CD14-positive monocyte (primary cell): ENCODE measurements at regions of chr6 and their contacts with region 1.

Region 1: DNA sequence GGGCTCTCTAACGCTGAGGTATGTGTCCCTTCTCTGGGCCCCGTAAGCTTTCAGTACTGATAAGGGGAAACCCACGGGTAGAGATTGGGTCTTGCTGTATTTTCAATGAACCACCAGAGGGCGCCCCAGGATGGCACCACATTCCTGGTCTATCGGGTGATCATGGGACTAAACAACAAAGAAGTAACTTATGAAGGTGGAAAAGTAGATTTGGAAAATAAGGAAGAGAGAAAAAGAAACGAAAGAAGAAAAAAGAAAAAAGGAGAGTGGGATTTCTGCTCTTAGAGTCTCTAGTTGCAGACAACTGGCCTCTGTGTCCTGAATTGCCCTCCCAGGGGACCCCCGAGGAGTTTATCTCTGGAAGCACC is 93.8 kb downstream of the GMPR start:
- DNase-seq: peak; percentile 57 to 76 (median 71)
- H3K4me3 ChIP-seq: no peak overlapping the region
- H3K4me3 Mint-ChIP-seq: no peak overlapping the region
- H3K27ac ChIP-seq: no peak overlapping the region
- H3K27ac Mint-ChIP-seq: no peak overlapping the region
- H3K4me1 ChIP-seq: peaks cover 21 to 23% of the 10 kb centered on the region in 2 donors
- H3K4me1 Mint-ChIP-seq: peaks cover 12% of the 10 kb centered on the region
- H3K27me3 ChIP-seq: no peaks in the 10 kb centered on the region
- H3K27me3 Mint-ChIP-seq: no peaks in the 10 kb centered on the region
- CTCF ChIP-seq: peak; percentile 72

Region 2: DNA sequence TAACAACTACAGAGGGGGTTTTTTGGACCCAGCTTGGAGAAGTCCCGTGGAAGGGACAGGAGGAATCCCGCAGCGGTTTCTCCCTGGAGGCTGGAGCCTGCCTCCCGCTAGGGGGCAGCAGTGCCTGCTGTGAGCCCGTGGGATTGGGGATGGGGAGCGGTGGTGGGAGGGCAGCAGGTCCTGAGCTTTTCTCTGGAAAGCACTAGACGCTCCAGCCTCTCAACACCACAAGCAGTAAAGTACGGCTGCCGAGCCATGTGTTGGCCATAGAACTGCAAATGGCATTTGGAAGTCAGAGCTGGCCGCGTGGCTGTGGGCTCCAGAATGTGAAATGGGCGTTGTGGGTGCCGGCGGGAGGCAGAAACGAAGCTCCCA is 46.0 kb before region 1 on chr6:
- intact Hi-C with region 1: no loop called
- DNase-seq: no peak
- H3K4me3 ChIP-seq: no peak overlapping the region
- H3K4me3 Mint-ChIP-seq: no peak overlapping the region
- H3K27ac ChIP-seq: no peak overlapping the region
- H3K27ac Mint-ChIP-seq: no peak overlapping the region
- H3K4me1 ChIP-seq: no peaks in the 10 kb centered on the region
- H3K4me1 Mint-ChIP-seq: no peaks in the 10 kb centered on the region
- H3K27me3 ChIP-seq: no peaks in the 10 kb centered on the region
- H3K27me3 Mint-ChIP-seq: peaks cover 2 to 3% (median 2%) of the 10 kb centered on the region in 3 donors
- CTCF ChIP-seq: no peak

Region 3: DNA sequence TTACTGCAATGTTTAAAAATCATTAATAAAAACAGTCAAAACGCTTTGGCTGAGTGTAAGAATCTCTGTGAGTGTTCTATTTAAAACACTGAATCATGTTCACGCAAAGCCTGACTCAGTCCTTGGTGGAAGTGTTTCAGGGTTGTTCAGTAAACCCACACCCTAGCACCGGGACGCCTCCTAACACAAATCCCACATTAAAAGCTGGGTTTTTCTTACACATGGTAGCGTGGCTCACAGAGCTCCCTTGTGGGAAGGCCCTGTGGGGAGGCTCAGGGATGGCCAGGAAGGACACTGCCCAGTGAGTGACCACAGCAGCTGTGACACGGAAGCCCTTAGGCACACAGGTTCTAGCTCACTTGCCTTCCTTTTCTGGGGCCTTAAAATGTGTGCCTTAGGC is 13.6 kb before region 1 on chr6:
- intact Hi-C with region 1: loop called in 1 of 2 experiments (anchors 1 kb)
- DNase-seq: no peak
- H3K4me3 ChIP-seq: no peak overlapping the region
- H3K4me3 Mint-ChIP-seq: no peak overlapping the region
- H3K27ac ChIP-seq: no peak overlapping the region
- H3K27ac Mint-ChIP-seq: no peak overlapping the region
- H3K4me1 ChIP-seq: peaks cover 27 to 32% of the 10 kb centered on the region in 2 donors
- H3K4me1 Mint-ChIP-seq: peaks cover 40% of the 10 kb centered on the region
- H3K27me3 ChIP-seq: no peaks in the 10 kb centered on the region
- H3K27me3 Mint-ChIP-seq: peaks cover 0 to 3% (median 3%) of the 10 kb centered on the region in 3 donors
- CTCF ChIP-seq: no peak

Region 4: DNA sequence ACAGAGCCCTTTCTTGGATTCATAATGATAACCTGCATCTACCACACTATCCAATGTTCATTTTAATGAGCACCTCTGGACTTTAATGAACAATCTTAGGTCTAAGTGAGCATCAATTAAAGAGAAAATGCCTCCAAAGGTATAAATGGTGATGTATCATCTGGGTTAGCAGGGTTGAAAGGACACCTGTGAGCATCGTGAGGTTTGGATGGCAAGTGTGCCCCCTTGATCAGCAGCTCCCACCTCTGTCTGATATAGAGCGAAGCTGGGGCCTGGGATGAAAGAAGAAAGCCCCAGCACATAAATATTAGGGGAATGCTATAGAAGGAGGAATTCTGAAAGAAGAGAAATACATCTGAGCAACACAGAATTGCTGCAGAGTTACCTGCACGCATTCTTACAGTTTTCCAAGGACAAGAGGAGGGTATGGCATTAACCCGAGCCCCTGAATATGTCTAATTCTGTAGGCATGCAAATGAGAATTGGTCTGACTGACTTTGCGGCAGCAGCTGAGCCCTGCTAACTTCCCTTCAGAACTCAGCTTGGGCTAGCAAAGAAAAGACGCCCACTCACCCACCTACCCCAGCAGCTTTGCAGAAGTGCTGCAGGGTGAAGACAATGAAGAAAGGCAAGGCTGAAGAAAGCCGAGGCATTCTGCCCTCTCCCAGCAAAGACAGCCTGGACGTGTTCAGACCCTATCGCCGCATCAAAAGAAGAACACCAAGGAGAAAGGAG is 42.5 kb after region 1 on chr6:
- intact Hi-C with region 1: no loop called
- DNase-seq: peak in 1 of 3 donors; percentile 3
- H3K4me3 ChIP-seq: no peak overlapping the region
- H3K4me3 Mint-ChIP-seq: no peak overlapping the region
- H3K27ac ChIP-seq: no peak overlapping the region
- H3K27ac Mint-ChIP-seq: no peak overlapping the region
- H3K4me1 ChIP-seq: no peaks in the 10 kb centered on the region
- H3K4me1 Mint-ChIP-seq: no peaks in the 10 kb centered on the region
- H3K27me3 ChIP-seq: no peaks in the 10 kb centered on the region
- H3K27me3 Mint-ChIP-seq: no peaks in the 10 kb centered on the region
- CTCF ChIP-seq: no peak

Region 5: GRCh38 chr6:16388488-16388887 is 56.3 kb after region 1 on chr6:
- intact Hi-C with region 1: no loop called
- DNase-seq: no peak
- H3K4me3 ChIP-seq: no peak overlapping the region
- H3K4me3 Mint-ChIP-seq: no peak overlapping the region
- H3K27ac ChIP-seq: no peak overlapping the region
- H3K27ac Mint-ChIP-seq: no peak overlapping the region
- H3K4me1 ChIP-seq: no peaks in the 10 kb centered on the region
- H3K4me1 Mint-ChIP-seq: peaks cover 2% of the 10 kb centered on the region
- H3K27me3 ChIP-seq: no peaks in the 10 kb centered on the region
- H3K27me3 Mint-ChIP-seq: peaks cover 0 to 7% (median 1%) of the 10 kb centered on the region in 3 donors
- CTCF ChIP-seq: no peak

Region 6: GRCh38 chr6:16409531-16410441 is 77.6 kb after region 1 on chr6:
- intact Hi-C with region 1: loop called (anchors 5 kb)
- DNase-seq: peak; percentile 47 to 59 (median 56)
- H3K4me3 ChIP-seq: no peak overlapping the region
- H3K4me3 Mint-ChIP-seq: no peak overlapping the region
- H3K27ac ChIP-seq: no peak overlapping the region
- H3K27ac Mint-ChIP-seq: peak overlapping the region in 1 of 7 donors; percentile 7
- H3K4me1 ChIP-seq: peaks cover 20 to 22% of the 10 kb centered on the region in 2 donors
- H3K4me1 Mint-ChIP-seq: peaks cover 36% of the 10 kb centered on the region
- H3K27me3 ChIP-seq: no peaks in the 10 kb centered on the region
- H3K27me3 Mint-ChIP-seq: peaks cover 1 to 2% (median 2%) of the 10 kb centered on the region in 3 donors
- CTCF ChIP-seq: peak; percentile 74

Region 7: DNA sequence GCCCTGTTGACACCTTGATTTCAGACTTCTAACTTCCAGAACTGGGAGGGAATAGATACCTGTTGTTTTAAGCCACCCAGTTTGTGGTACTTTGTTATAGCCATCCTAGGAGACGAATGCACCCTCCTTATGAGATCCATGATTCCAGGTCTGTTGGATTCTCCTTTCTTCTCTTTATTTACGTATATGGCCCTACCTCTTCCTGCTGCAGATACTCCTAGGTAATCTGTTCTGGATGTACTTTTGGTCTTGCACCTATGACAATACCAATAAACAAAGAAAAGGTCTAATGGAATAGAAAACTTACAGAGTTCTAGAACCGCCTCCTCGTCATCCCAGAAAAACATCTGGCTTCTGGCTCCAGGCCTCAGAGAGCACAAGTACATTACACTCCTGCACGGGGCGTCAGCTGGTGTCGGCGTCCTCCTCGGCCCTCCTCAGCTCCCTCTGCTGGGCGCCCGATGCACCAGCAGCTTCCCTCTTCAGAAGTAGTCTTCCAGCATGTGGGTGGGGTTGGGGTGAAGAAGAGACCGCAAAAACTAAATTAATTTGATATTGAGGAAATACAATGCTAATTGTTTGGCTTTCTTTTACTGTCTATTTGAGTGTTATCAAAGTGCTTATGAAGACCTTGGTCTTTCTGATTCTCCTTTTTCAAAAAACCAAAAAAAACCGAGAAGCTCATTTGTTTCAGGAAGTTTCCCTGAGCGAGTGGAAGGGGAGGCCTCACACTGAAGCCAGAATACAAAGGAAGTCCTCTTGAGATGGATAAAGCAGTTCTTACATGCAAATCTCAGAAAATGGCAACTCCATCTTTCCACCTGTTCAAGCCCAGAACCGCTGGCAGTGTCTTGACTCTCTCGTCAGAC is 438.8 kb after region 1 on chr6:
- intact Hi-C with region 1: loop called (anchors 5 to 10 kb)
- DNase-seq: peak; percentile 69 to 83 (median 75)
- H3K4me3 ChIP-seq: peak overlapping the region in 1 of 3 experiments; percentile 37
- H3K4me3 Mint-ChIP-seq: peak overlapping the region; percentile 66 to 86
- H3K27ac ChIP-seq: no peak overlapping the region
- H3K27ac Mint-ChIP-seq: peak overlapping the region; percentile 24 to 88 (median 62)
- H3K4me1 ChIP-seq: peaks cover 29 to 31% of the 10 kb centered on the region in 2 donors
- H3K4me1 Mint-ChIP-seq: peaks cover 44% of the 10 kb centered on the region
- H3K27me3 ChIP-seq: no peaks in the 10 kb centered on the region
- H3K27me3 Mint-ChIP-seq: peaks cover 0 to 2% (median 0%) of the 10 kb centered on the region in 3 donors
- CTCF ChIP-seq: peak; percentile 97

Region 8: DNA sequence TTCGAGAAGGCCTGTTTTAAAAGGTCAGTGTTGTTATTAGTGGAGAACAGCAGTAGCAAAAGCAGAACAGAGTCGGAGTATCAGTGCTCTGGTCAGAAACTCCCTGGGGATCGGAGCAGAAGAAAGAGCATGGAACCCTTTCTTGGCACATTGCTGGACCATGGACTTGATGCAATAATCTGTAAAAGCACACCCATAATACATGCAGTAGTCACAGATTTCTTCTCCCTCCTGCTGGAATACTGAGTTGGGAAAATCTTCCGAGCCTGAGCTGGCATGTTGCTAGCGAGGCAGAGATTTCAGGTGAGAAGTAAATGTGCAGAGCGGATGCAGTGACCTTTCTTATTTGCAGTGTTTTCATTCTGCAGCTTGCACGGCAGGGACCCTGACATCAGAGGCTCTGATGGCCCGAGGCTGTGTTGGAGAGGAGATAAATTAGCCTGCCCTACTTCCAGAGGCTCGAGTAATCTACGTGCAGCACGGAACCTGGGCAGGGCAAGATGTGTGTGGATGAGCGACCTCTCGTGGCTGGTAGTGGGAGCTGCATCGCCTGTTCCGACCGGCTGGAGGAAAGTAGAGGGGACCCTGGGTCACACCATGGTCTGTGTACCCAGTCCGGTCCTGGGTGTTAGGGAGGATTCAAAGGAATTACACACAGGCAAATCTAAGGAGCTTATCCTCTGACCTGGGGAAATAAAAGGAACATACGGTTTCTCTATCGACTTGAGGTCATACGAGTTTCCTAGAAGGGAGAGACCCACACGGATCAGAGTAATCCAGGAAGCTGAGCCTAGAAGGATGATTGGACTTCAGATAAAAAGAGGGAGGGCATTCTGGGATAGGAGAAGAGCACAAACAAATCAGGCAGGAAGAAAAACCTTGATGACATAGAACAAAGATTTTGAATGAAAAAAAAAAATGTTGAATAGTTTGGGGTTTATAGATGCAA is 632.7 kb after region 1 on chr6:
- intact Hi-C with region 1: loop called (anchors 2 to 10 kb)
- DNase-seq: peak; percentile 44 to 64 (median 56)
- H3K4me3 ChIP-seq: peak overlapping the region in 1 of 3 experiments; percentile 5
- H3K4me3 Mint-ChIP-seq: peak overlapping the region in 1 of 2 donors; percentile 68
- H3K27ac ChIP-seq: no peak overlapping the region
- H3K27ac Mint-ChIP-seq: peak overlapping the region in 1 of 7 donors; percentile 50
- H3K4me1 ChIP-seq: peaks cover 3 to 4% of the 10 kb centered on the region in 2 donors
- H3K4me1 Mint-ChIP-seq: peaks cover 8% of the 10 kb centered on the region
- H3K27me3 ChIP-seq: no peaks in the 10 kb centered on the region
- H3K27me3 Mint-ChIP-seq: peaks cover 1 to 5% (median 2%) of the 10 kb centered on the region in 3 donors
- CTCF ChIP-seq: peak; percentile 94